Left colon (tissue), 2 donors: ENCODE measurements at regions of chr4 and their contacts with region 1.

Region 1: DNA sequence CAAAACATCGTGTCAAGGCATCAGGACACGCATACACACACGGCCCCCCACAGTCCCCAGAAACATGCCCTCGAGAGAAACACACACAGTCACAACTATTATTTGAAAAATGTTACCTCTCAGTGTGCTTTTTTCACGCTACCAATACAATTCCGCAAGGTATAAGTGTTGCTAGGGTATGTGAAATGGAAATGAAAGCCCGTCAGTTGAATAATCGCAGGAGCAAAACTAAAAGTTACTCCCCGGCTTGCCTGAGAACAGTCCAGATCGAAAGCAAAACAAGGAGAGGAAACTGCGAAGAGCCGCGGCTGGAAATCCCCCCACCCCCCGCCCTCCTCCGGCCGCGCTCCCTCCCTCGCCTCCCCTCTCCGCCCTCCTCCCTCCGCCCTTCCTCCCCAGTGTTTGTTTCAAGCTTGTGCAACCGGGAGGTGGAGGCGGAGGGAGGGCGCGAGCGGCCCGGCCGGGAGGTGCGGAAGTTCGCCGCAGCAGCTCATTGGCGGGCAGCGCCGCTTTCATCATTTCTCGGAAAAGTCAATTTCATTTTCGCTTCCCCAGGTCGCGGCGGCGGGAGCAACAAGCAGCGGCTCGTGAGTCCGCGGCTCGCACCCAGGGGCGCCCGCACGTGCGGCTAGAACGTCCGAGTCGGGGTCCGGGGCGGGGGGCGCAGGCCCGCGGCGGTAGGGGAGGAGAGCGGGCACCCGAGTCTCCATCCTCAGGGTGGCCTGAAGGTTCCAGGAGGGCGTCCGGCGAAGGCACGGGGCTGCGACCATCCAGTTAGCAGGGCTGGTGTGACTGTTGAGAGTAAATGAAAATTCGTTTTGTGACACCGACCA is at the start of gene IRF2:
- DNase-seq: peak; percentile 98 to 99
- ATAC-seq: peak; percentile 79
- total RNA-seq, gene IRF2: 45.5 to 51.3 TPM

Region 2: GRCh38 chr4:184329659-184330400 is 144.6 kb before region 1 on chr4:
- intact Hi-C with region 1: no loop called
- DNase-seq: no peak
- ATAC-seq: peak; percentile 11

Region 3: GRCh38 chr4:184384056-184384809 is 90.2 kb before region 1 on chr4:
- intact Hi-C with region 1: loop called in 1 of 2 experiments (anchors 10 kb)
- DNase-seq: peak in 1 of 2 donors; percentile 33
- ATAC-seq: no peak